ENCODE measurements at regions of chr21 and their contacts with region 1.

Region 1: GRCh38 chr21:31866077-31866511 is 6.7 kb upstream of the HUNK start:
- DNase-seq: peak; percentile 34 to 74 (median 50)
- ATAC-seq: peak; percentile 51
- H3K4me3 ChIP-seq: no peak overlapping the region
- H3K4me3 Mint-ChIP-seq: no peak overlapping the region
- H3K27ac ChIP-seq: no peak overlapping the region
- H3K27ac Mint-ChIP-seq: no peak overlapping the region
- H3K4me1 ChIP-seq: no peaks in the 10 kb centered on the region
- H3K4me1 Mint-ChIP-seq: no peaks in the 10 kb centered on the region
- H3K27me3 ChIP-seq: peaks cover 8 to 15% of the 10 kb centered on the region in 2 experiments
- H3K27me3 Mint-ChIP-seq: peaks cover 23% of the 10 kb centered on the region
- CTCF ChIP-seq: peak; percentile 66

Region 2: DNA sequence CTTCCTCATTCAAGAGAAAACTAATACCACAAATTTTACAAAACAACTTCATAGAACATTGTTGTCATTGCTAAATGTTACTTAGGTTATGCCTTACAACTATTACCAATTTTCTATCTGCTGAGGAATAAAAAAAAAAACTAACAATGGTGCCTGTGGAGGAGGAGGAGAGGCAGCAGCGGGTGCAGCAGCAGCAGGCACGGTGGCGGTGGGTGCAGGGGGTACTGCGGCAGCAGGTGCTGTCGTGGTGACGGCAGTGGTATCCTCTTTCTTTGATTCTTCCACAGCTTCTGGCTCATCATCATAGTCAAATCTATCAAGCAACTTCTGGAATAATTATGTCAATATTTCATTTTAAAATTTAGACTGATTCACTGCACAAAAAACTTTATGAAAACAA is 169.7 kb before region 1 on chr21:
- CTCF ChIA-PET with region 1: no interaction called
- POLR2A ChIA-PET with region 1: no interaction called
- intact Hi-C with region 1: no loop called
- DNase-seq: no peak
- ATAC-seq: no peak
- H3K4me3 ChIP-seq: no peak overlapping the region
- H3K4me3 Mint-ChIP-seq: no peak overlapping the region
- H3K27ac ChIP-seq: no peak overlapping the region
- H3K27ac Mint-ChIP-seq: peak overlapping the region; percentile 2
- H3K4me1 ChIP-seq: no peaks in the 10 kb centered on the region
- H3K4me1 Mint-ChIP-seq: peaks cover 4% of the 10 kb centered on the region
- H3K27me3 ChIP-seq: no peaks in the 10 kb centered on the region
- H3K27me3 Mint-ChIP-seq: no peaks in the 10 kb centered on the region
- CTCF ChIP-seq: no peak

Region 3: DNA sequence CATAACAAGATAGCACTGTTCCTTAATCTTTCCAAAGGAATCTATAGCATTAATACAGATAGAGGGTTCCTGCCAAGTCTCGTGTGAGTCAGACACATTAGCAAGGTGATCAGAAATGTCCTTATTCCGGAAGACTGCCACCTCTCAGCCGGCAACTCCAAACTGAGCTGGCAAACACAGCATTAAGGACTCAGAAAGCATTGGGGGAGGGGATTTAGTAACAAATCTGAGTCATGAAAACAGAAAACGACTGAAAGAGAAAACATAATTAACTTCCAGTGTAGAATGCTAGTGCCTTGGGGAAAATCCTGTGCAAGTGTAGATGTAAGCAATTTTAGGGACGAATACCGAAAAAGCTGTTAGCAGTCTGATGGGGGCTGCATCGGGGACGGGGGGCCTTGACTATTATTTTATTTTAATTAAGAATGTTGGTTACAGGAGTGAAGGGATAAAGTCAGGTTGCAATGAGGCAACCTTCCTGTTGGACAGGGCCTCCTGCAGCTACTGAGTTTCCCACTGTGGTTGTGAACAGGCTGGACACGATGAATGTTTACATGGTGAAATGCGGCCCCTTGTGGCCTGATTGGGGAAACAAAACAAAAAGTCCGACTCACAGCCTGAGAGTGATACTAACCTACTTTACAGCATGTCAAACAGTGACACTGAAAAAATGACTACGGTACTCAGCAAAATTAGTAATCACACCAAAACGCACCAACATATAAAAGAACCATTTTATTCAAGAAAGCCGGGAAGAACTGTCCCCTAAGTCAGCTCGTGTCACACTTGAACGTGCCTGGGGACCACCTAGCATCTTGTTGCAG is 392.1 kb after region 1 on chr21:
- CTCF ChIA-PET with region 1: no interaction called
- POLR2A ChIA-PET with region 1: no interaction called
- intact Hi-C with region 1: loop called in 1 of 2 experiments (anchors 5 kb)
- DNase-seq: peak in 5 of 14 experiments; percentile 10 to 46 (median 36)
- ATAC-seq: peak; percentile 41
- H3K4me3 ChIP-seq: no peak overlapping the region
- H3K4me3 Mint-ChIP-seq: no peak overlapping the region
- H3K27ac ChIP-seq: no peak overlapping the region
- H3K27ac Mint-ChIP-seq: no peak overlapping the region
- H3K4me1 ChIP-seq: no peaks in the 10 kb centered on the region
- H3K4me1 Mint-ChIP-seq: no peaks in the 10 kb centered on the region
- H3K27me3 ChIP-seq: no peaks in the 10 kb centered on the region
- H3K27me3 Mint-ChIP-seq: peaks cover 14% of the 10 kb centered on the region
- CTCF ChIP-seq: peak; percentile 60